ENCODE measurements at regions of chr2 and their contacts with region 1.

Region 1: DNA sequence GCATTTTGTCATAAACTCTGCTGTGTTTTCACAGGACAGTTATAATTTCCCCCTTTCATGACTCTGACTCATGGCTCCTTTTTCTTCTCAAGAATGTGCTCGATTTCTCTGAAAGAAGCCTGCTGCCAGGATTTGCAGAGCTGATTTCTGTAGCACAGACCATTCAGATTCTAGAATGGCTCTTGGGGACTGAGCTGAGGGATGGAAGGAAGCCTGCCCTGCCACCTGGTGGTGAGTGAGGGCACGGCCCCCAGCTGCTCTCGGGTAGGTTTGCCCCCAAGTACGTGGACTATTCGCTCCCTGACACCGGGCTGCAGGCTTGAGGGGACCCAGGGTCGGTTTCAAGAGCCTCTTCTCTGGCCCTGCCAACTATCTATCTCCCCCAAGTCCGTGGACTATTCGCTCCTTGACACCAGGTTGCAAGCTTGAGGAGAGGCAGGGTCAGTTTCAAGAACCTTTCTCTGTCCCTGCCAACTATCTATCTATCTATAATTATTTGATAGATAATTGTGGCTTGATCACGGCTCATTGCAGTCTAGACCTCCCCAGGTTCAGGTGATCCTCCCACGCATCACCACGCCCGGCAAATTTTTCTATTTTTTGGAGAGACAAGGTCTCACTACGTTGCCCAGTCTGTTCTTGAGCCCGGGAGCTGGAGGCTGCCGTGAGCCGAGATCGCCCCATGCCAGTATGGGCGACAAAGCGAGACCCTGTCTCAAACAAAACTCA is 1.4 kb upstream of the SMYD5 start:
- DNase-seq: peak; percentile 74 to 88 (median 82)
- H3K4me3 ChIP-seq: peak overlapping the region in 3 of 7 experiments; percentile 8 to 77 (median 8)
- H3K27ac ChIP-seq: no peak overlapping the region
- H3K4me1 ChIP-seq: peaks cover 5 to 28% (median 23%) of the 10 kb centered on the region in 4 experiments
- H3K27me3 ChIP-seq: peaks cover 0 to 3% (median 0%) of the 10 kb centered on the region in 5 experiments

Region 2: DNA sequence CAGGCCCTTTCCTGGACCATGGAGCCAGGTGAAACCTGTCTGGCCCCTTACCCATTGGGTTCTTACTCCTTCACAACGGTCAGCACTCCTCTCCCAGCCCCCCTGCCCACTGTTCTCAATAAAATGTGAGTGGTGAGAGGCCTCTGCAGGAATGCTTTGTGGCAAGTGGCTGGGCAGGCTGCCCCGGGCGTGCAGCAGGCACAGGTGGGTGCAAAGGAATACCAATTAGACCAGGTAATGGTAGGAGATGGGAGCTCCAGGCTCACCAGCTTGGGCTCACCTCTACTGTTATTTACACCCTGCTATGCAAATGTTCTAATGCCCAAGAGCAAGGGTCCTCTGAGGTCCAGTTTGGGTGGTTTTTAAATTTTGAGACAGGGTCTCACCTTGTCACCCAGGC is 14.5 kb after region 1 on chr2:
- CTCF ChIA-PET with region 1: interaction called, 12 read pairs
- POLR2A ChIA-PET with region 1: no interaction called
- DNase-seq: no peak
- H3K4me3 ChIP-seq: no peak overlapping the region
- H3K27ac ChIP-seq: no peak overlapping the region
- H3K4me1 ChIP-seq: peaks cover 0 to 13% (median 12%) of the 10 kb centered on the region in 4 experiments
- H3K27me3 ChIP-seq: no peaks in the 10 kb centered on the region

Region 3: GRCh38 chr2:73233154-73233931 is 20.7 kb after region 1 on chr2 and contains the start of gene PRADC1:
- CTCF ChIA-PET with region 1: interaction called, 12 read pairs
- POLR2A ChIA-PET with region 1: interaction called, 3 read pairs
- DNase-seq: peak; percentile 99
- H3K4me3 ChIP-seq: peak within 1 kb of the TSS; percentile 77 to 96 (median 92)
- H3K27ac ChIP-seq: peak within 1 kb of the TSS; percentile 91 to 96
- H3K4me1 ChIP-seq: peaks cover 16 to 38% (median 27%) of the 10 kb centered on the region in 4 experiments
- H3K27me3 ChIP-seq: no peaks in the 10 kb centered on the region

Measured in common myeloid progenitor, CD34-positive (primary cell).